ENCODE measurements at regions of chr19 and their contacts with region 1.

Region 1: GRCh38 chr19:41872775-41873647 is 4.1 kb upstream of the CD79A start:
- DNase-seq: peak; percentile 70 to 94 (median 84)
- ATAC-seq: peak; percentile 86 to 95 (median 90)
- H3K4me3 ChIP-seq: no peak overlapping the region
- H3K27ac ChIP-seq: no peak overlapping the region
- H3K4me1 ChIP-seq: peaks cover 0 to 5% (median 0%) of the 10 kb centered on the region in 3 donors
- H3K27me3 ChIP-seq: no peaks in the 10 kb centered on the region
- CTCF ChIP-seq: peak; percentile 41 to 71 (median 58)

Region 2: GRCh38 chr19:41945135-41945766 is 72.2 kb after region 1 on chr19:
- intact Hi-C with region 1: loop called in 2 of 3 experiments (anchors 5 kb)
- DNase-seq: no peak
- ATAC-seq: peak in 3 of 4 donors; percentile 14 to 46 (median 14)
- H3K4me3 ChIP-seq: no peak overlapping the region
- H3K27ac ChIP-seq: no peak overlapping the region
- H3K4me1 ChIP-seq: no peaks in the 10 kb centered on the region
- H3K27me3 ChIP-seq: no peaks in the 10 kb centered on the region
- CTCF ChIP-seq: no peak

Region 3: DNA sequence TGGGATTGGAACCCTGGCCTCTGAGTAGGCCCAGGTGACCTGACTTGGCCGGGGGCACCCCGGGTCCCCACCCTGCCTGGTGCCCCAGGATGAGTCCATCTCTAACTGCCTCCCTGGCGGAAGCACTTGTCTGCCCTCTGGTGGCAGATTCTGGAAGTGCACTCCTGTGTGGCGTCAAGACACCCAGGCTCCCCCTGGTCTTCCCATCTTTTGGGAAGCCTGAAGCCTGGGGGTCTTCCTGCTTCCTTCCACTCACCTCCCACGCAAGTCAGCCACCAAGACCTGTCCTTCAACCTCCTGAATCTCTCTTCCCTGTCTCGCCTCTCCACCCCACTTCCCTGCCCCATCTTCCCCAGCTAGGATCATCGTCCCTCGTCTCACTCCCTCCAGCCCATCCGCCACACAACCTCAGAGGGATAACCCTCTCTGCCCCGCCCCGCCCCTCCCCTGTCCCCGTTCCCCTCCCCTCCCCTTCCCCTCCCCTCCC is 78.7 kb after region 1 on chr19:
- intact Hi-C with region 1: loop called in 2 of 3 experiments (anchors 5 kb)
- DNase-seq: peak; percentile 63 to 98 (median 84)
- ATAC-seq: peak; percentile 65 to 96 (median 88)
- H3K4me3 ChIP-seq: no peak overlapping the region
- H3K27ac ChIP-seq: no peak overlapping the region
- H3K4me1 ChIP-seq: no peaks in the 10 kb centered on the region
- H3K27me3 ChIP-seq: no peaks in the 10 kb centered on the region
- CTCF ChIP-seq: peak; percentile 97 to 98 (median 98)

Region 4: GRCh38 chr19:42010245-42011126 is 137.5 kb after region 1 on chr19:
- intact Hi-C with region 1: no loop called
- DNase-seq: peak in 1 of 6 donors; percentile 8
- ATAC-seq: no peak
- H3K4me3 ChIP-seq: no peak overlapping the region
- H3K27ac ChIP-seq: no peak overlapping the region
- H3K4me1 ChIP-seq: no peaks in the 10 kb centered on the region
- H3K27me3 ChIP-seq: no peaks in the 10 kb centered on the region
- CTCF ChIP-seq: no peak

Measured in pancreas (tissue), 10 donors.